Activated CD4-positive, alpha-beta memory T cell treated with anti-CD3 and anti-CD28 coated beads for 36 hours (primary cell): ENCODE measurements at regions of chr11 and their contacts with region 1.

Region 1: GRCh38 chr11:128290106-128290840 is 297.1 kb downstream of the ETS1 start:
- DNase-seq: peak; percentile 80
- H3K4me3 Mint-ChIP-seq: peak overlapping the region; percentile 81
- H3K27ac Mint-ChIP-seq: peak overlapping the region; percentile 96
- H3K4me1 Mint-ChIP-seq: peaks cover 97% of the 10 kb centered on the region
- H3K27me3 Mint-ChIP-seq: no peaks in the 10 kb centered on the region

Region 2: DNA sequence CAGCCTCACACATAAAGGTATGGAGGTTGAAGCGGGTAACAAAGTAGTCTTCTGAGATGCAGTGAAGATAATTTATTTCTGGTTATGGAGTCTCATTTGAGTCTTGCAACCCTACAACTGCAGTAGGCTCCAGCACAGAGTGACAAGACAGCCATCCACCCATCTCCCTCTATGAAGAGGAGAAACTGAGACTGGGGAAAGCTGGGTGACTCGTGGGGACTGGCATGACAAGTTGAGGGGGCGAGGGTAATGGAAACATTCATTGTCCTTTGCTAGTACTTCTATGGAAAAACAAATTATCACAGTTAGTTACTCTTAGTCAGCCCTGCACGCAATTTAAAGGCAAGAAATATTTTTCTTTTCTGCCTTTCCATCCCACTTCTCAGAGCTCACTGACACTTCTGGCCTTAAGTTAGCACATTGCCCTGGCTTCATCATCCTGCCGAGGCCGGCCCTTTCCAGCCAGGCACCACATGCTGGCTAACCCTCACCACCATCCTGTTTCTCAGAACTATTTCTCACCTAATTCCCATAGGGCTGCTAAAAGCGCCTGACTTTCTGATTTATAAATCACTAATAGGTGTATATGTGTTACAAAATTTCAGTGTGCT is 64.1 kb before region 1 on chr11:
- CTCF ChIA-PET with region 1: interaction called, 4 read pairs
- POLR2A ChIA-PET with region 1: interaction called, 10 read pairs
- intact Hi-C with region 1: loop called (anchors 1 kb)
- DNase-seq: peak; percentile 66
- H3K4me3 Mint-ChIP-seq: no peak overlapping the region
- H3K27ac Mint-ChIP-seq: peak overlapping the region; percentile 9
- H3K4me1 Mint-ChIP-seq: peaks cover 46% of the 10 kb centered on the region
- H3K27me3 Mint-ChIP-seq: no peaks in the 10 kb centered on the region

Region 3: GRCh38 chr11:128323381-128323780 is 33.1 kb after region 1 on chr11:
- CTCF ChIA-PET with region 1: interaction called, 53 read pairs
- POLR2A ChIA-PET with region 1: interaction called, 66 read pairs
- intact Hi-C with region 1: loop called (anchors 1 kb)
- DNase-seq: peak; percentile 65
- H3K4me3 Mint-ChIP-seq: peak overlapping the region; percentile 36
- H3K27ac Mint-ChIP-seq: peak overlapping the region; percentile 94
- H3K4me1 Mint-ChIP-seq: peaks cover 88% of the 10 kb centered on the region
- H3K27me3 Mint-ChIP-seq: no peaks in the 10 kb centered on the region

Region 4: GRCh38 chr11:128422576-128423370 is 132.5 kb after region 1 on chr11:
- CTCF ChIA-PET with region 1: interaction called, 5 read pairs
- POLR2A ChIA-PET with region 1: interaction called, 7 read pairs
- intact Hi-C with region 1: loop called (anchors 1 kb)
- DNase-seq: peak; percentile 95
- H3K4me3 Mint-ChIP-seq: peak overlapping the region; percentile 49
- H3K27ac Mint-ChIP-seq: peak overlapping the region; percentile 65
- H3K4me1 Mint-ChIP-seq: peaks cover 34% of the 10 kb centered on the region
- H3K27me3 Mint-ChIP-seq: no peaks in the 10 kb centered on the region

Region 5: GRCh38 chr11:128506999-128507611 is 216.8 kb after region 1 on chr11:
- CTCF ChIA-PET with region 1: interaction called, 19 read pairs
- POLR2A ChIA-PET with region 1: interaction called, 18 read pairs
- intact Hi-C with region 1: loop called (anchors 2 kb)
- DNase-seq: peak; percentile 74
- H3K4me3 Mint-ChIP-seq: peak overlapping the region; percentile 77
- H3K27ac Mint-ChIP-seq: peak overlapping the region; percentile 96
- H3K4me1 Mint-ChIP-seq: peaks cover 90% of the 10 kb centered on the region
- H3K27me3 Mint-ChIP-seq: no peaks in the 10 kb centered on the region

Region 6: GRCh38 chr11:128624269-128625175 is 334.2 kb after region 1 on chr11:
- CTCF ChIA-PET with region 1: interaction called, 92 read pairs
- POLR2A ChIA-PET with region 1: interaction called, 50 read pairs
- intact Hi-C with region 1: loop called (anchors 1 kb)
- DNase-seq: peak; percentile 83
- H3K4me3 Mint-ChIP-seq: peak overlapping the region; percentile 57
- H3K27ac Mint-ChIP-seq: peak overlapping the region; percentile 94
- H3K4me1 Mint-ChIP-seq: peaks cover 95% of the 10 kb centered on the region
- H3K27me3 Mint-ChIP-seq: no peaks in the 10 kb centered on the region

Region 7: GRCh38 chr11:128765571-128766549 is 475.6 kb after region 1 on chr11:
- CTCF ChIA-PET with region 1: no interaction called
- POLR2A ChIA-PET with region 1: no interaction called
- intact Hi-C with region 1: no loop called
- DNase-seq: no peak
- H3K4me3 Mint-ChIP-seq: no peak overlapping the region
- H3K27ac Mint-ChIP-seq: no peak overlapping the region
- H3K4me1 Mint-ChIP-seq: peaks cover 16% of the 10 kb centered on the region
- H3K27me3 Mint-ChIP-seq: no peaks in the 10 kb centered on the region